Dendritic cell treated with granulocyte-macrophage colony-stimulating factor and Interleukin-4, amounts not matched to agents 40 ng/mL and 50 ng/mL, for 4 days (primary cell): ENCODE measurements at regions of chr7 and their contacts with region 1.

Region 1: GRCh38 chr7:133081599-133082389 is at the start of gene CHCHD3:
- H3K4me3 Mint-ChIP-seq: peak within 1 kb of the TSS; percentile 80
- H3K27ac Mint-ChIP-seq: peak within 1 kb of the TSS; percentile 93
- H3K4me1 Mint-ChIP-seq: peaks cover 19% of the 10 kb centered on the region
- H3K27me3 Mint-ChIP-seq: no peaks in the 10 kb centered on the region

Region 2: DNA sequence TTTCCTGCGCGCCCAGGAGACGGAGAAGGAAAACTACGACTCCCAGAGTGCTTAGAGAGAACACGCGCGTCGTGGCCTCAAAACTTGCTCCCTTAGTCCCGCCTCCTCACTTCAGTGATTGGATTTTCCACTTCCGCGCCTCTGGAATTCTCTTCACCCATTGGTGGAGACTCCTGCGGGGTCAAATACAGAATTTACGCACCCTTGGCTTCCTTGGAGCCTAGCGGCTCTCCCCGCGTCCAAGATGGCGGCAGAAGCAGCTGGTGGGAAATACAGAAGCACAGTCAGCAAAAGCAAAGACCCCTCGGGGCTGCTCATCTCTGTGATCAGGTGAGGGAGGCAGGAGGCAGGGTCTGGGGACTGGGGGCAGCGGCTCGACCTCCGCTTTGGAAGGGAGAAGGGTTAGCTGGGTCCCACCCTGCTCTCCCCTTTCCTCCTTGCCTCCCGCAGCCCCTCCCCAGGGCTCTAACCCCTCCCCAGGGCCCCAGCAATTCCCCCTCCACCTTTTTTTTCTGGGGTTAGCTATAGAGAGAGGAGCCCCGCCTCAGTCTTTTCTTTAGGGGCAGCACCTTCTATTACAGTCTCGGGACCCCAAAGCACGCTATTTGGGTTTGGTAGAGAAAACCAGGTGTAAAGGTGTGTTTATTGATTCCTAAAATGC is 171.2 kb after region 1 on chr7 and contains the start of gene EXOC4:
- intact Hi-C with region 1: loop called (anchors 2 kb)
- H3K4me3 Mint-ChIP-seq: peak within 1 kb of the TSS; percentile 82
- H3K27ac Mint-ChIP-seq: peak within 1 kb of the TSS; percentile 97
- H3K4me1 Mint-ChIP-seq: peaks cover 26% of the 10 kb centered on the region
- H3K27me3 Mint-ChIP-seq: no peaks in the 10 kb centered on the region

Region 3: DNA sequence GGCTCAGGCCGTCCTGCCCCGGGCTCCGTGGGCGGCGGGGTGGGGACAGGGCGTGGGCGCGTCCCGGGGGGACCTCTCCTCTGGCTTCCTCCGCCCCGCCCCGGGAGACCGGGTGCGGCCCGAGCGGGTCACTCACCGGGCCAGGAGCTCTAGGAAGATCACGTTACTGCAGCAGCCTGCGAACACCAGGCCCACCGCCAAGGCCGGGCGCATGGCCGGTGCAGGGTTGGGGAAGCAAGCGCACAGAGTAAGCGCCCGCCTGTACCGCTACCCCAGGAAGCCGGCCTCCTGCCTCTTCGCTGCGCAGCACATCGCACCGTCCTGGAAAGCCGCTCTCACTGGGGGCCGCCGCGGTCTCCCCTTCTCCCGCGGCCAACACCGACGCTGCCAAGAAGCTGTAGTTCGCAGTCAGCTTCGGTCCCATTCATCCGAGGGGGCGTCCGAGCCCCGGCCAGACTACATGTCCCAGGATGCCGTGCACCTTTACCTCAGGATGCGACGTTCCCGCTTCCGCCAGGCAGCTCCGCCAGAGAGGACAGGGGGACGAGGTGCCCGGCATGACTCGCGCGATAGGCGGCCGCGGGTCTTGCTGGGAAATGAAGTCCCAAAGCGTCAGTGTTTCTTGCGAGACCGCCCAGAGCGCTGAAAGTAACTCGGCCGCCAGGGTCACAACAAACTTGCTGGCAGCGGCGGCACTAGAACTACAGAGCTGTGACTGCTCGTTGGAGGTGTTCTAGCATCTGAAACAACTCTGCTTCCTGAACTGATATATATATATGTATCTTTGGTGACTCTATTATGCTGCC is 1234.9 kb after region 1 on chr7 and contains the start of gene SLC35B4:
- intact Hi-C with region 1: loop called (anchors 5 kb)
- H3K4me3 Mint-ChIP-seq: peak within 1 kb of the TSS; percentile 93
- H3K27ac Mint-ChIP-seq: peak within 1 kb of the TSS; percentile 87
- H3K4me1 Mint-ChIP-seq: peaks cover 12% of the 10 kb centered on the region
- H3K27me3 Mint-ChIP-seq: peaks cover 5% of the 10 kb centered on the region